Uterus (tissue), 4 donors: ENCODE measurements at regions of chr4 and their contacts with region 1.

Region 1: DNA sequence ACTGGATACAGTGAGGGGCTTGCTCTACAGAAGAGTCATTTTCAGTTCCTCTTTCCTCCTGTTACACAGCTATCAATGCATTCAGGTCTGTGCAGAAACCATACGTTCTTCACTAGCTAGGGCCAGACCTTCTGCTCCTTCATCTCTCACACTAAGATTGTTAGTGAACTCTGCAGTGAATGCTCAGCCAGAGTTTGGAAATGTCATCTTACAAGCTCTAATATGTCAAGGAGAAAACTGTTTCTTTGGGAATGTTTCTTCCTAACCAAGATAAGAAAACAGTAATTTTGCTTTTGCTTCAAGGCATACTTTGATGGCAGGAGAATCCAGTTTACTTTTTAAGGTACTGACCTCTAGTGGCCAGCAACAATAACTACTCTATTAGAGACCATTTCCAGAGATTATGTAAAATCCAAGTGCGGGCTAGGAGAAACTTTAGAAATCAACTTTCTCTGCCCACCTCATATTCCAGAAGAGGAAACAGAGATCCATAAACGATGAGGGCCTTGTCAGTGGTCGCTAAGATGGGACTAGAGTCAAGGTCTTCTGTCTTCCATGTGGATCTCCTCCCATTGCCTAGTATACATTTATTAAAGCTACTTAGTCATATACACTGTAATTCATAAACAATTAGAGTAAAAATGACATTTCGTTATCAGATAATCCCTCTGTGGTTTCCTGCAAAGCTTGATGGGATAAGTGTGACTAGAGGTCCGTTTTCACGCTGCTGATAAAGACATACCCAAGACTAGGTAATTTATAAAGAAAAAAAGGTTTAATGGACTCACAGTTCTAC is 12.1 kb upstream of the CC2D2A start:
- DNase-seq: no peak
- H3K4me3 ChIP-seq: no peak overlapping the region
- H3K27ac ChIP-seq: peak overlapping the region; percentile 47 to 63
- H3K4me1 ChIP-seq: no peaks in the 10 kb centered on the region
- H3K27me3 ChIP-seq: no peaks in the 10 kb centered on the region
- CTCF ChIP-seq: peak; percentile 73 to 86 (median 82)
- POLR2A ChIP-seq: no peak

Region 2: GRCh38 chr4:15231265-15232091 is 226.1 kb before region 1 on chr4:
- intact Hi-C with region 1: loop called (anchors 5 kb)
- DNase-seq: peak; percentile 83 to 91
- H3K4me3 ChIP-seq: no peak overlapping the region
- H3K27ac ChIP-seq: peak overlapping the region; percentile 33 to 45
- H3K4me1 ChIP-seq: peaks cover 0 to 12% of the 10 kb centered on the region in 2 donors
- H3K27me3 ChIP-seq: no peaks in the 10 kb centered on the region
- CTCF ChIP-seq: peak; percentile 75 to 83 (median 78)
- POLR2A ChIP-seq: no peak